Heart right ventricle (tissue), 16 donors: ENCODE measurements at regions of chr3 and their contacts with region 1.

Region 1: DNA sequence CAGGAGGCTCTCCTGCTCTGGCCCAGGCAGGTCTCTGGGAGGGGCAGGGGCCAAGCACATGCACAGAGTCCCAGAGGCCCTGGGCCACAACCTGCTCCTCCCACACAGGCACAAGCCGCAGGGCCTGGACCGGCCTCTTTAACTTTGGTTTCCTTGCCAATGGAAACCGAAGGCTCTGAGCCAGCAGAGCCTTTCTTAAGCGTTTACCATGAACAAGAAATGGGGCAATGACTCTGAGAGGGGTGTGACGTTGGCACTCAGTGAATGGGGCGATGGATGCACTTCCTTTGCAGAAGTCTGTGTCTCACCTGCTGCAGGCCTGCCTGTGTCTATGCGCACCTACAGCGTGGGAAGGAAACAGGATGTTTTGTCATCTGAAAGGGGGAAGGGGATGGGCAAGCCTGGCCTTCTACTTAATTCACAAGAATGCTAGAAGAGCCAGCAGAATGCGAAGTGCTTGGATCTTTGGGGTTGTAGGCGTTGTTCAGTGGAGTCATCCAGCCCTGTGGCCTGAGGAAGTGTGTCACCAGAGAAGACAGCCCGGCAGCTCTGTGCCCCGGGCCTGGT is 41.8 kb downstream of the IFT122 start:
- DNase-seq: peak in 1 of 2 donors; percentile 63
- ATAC-seq: peak; percentile 59 to 86 (median 74)
- H3K4me3 ChIP-seq: no peak overlapping the region
- H3K27ac ChIP-seq: peak overlapping the region; percentile 14 to 80 (median 72)
- H3K4me1 ChIP-seq: peaks cover 14 to 48% (median 39%) of the 10 kb centered on the region in 9 donors
- H3K27me3 ChIP-seq: no peaks in the 10 kb centered on the region
- CTCF ChIP-seq: no peak

Region 2: GRCh38 chr3:129449279-129450115 is 32.4 kb before region 1 on chr3:
- intact Hi-C with region 1: loop called in 2 of 10 experiments (anchors 5 kb)
- DNase-seq: no peak
- ATAC-seq: peak in 2 of 8 donors; percentile 28 to 34
- H3K4me3 ChIP-seq: no peak overlapping the region
- H3K27ac ChIP-seq: peak overlapping the region in 1 of 10 donors; percentile 17
- H3K4me1 ChIP-seq: peaks cover 0 to 31% (median 9%) of the 10 kb centered on the region in 9 donors
- H3K27me3 ChIP-seq: no peaks in the 10 kb centered on the region
- CTCF ChIP-seq: no peak

Region 3: GRCh38 chr3:129592381-129593131 is 110.7 kb after region 1 on chr3:
- intact Hi-C with region 1: no loop called
- DNase-seq: peak; percentile 85 to 88
- ATAC-seq: peak; percentile 6 to 57 (median 24)
- H3K4me3 ChIP-seq: peak overlapping the region in 8 of 10 donors; percentile 8 to 37 (median 28)
- H3K27ac ChIP-seq: peak overlapping the region; percentile 86 to 99 (median 92)
- H3K4me1 ChIP-seq: peaks cover 46 to 100% (median 96%) of the 10 kb centered on the region in 9 donors
- H3K27me3 ChIP-seq: no peaks in the 10 kb centered on the region
- CTCF ChIP-seq: no peak

Region 4: DNA sequence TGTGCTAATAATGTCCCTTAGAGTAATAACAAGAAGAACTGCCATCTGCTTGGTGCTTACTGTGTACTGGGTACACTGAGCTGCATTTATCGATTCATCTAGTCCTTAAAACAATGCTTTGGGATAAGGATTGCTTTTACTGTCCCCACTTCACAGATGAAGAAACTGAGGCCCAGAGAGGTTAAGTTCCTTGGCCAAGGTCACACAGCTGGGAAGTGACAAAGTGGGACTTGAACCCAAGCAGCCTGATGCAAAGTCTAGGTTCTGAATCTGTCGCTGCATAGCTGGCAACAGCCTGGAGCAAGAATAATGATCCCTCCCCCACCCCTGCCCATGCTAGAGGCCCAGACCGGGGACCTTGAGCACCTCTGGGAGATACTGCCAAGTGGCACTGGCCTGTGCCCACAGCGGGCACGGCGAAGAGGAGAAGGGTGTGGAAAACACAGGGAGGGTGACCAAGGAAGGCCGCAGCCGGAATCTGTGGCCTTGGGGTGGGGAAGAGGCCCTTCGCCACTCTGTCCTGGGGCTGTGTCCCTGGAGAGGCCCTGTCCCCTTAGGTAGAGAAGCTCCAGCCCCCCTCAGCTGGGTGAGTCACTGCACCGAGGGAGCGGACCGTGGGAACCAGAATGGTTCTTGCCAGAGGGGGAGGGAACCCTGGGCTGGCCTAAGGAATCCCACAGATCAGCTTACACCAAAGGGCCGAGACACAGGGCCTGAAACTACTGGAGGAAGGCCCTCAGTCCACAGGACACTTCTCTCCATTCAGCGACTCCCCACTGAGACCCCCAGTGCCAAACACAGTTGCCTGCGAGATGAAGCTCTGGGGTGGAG is 121.1 kb after region 1 on chr3:
- intact Hi-C with region 1: no loop called
- DNase-seq: peak; percentile 79 to 88
- ATAC-seq: peak; percentile 46 to 71 (median 68)
- H3K4me3 ChIP-seq: peak overlapping the region; percentile 62 to 91 (median 74)
- H3K27ac ChIP-seq: peak overlapping the region; percentile 75 to 99 (median 92)
- H3K4me1 ChIP-seq: peaks cover 19 to 80% (median 75%) of the 10 kb centered on the region in 9 donors
- H3K27me3 ChIP-seq: peaks cover 0 to 18% (median 4%) of the 10 kb centered on the region in 7 donors
- CTCF ChIP-seq: no peak